RWPE1 (cell line): ENCODE measurements at regions of chr16 and their contacts with region 1.

Region 1: GRCh38 chr16:77660311-77660710 is 62.0 kb upstream of the NUDT7 start:
- DNase-seq: peak; percentile 8
- H3K27ac ChIP-seq: no peak overlapping the region
- CTCF ChIP-seq: 0 out of 2 replicates have a peak, but pooled peaks have one; percentile 18

Region 2: DNA sequence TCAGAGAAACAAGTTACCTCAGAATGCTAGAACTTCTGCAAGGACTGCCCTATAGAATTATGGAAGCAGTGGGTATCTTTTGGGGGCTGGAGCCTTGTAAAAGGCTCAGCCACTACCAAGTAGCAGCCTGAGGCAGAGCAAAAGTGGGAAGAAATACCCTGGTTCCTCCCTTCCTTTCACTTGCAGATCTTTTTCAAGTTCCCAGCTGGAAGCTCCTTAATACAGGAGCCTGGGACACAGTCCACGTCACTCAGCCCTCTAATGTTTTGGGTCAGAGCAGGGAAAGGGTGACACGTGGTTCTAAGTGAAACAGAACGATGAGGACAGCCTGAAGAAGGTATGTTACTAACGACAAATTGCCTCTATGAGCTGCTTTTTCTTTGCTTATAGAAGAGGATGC is 1290.0 kb before region 1 on chr16:
- CTCF ChIA-PET with region 1: interaction called, 10 read pairs
- POLR2A ChIA-PET with region 1: no interaction called
- DNase-seq: no peak
- H3K27ac ChIP-seq: no peak overlapping the region
- CTCF ChIP-seq: no peak